ENCODE measurements at regions of chr17 and their contacts with region 1.

Region 1: DNA sequence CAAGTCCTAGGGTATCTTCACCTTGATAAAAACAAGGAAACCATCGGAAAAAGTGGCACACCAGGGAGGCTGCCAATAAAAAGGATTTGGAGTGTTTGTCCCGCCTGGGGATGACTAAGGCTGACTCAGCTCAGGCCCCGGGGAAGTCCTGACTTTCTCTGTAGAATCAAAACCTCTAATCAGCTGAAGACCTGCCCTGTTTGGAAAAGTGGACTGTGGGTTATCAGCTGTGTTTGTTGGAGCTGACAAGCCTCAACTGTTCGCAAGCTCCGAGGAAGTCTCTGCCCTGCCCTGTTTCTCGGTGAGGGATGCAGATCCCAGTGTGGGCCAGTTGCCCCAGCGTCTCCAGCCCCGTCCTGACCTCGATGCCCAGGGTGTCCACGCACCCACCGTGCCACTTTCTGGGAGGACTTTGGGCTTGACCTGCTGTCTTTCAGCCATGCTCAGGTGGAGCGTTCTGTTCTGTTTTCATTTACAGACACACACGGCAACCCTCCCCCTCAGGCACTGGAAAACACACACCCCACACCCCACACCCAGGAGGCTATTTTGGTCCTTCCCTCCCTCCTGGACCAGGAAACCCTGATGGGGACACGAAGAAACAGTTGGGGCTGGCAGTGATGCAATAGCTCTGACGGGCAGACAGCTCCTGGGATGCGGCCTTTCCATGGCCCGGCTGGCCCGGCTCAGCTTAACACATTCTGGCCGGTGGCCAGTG is 27.6 kb upstream of the PITPNA start:
- DNase-seq: peak; percentile 85 to 95 (median 92)
- H3K4me3 ChIP-seq: no peak overlapping the region
- H3K4me3 Mint-ChIP-seq: peak overlapping the region; percentile 35 to 60
- H3K27ac ChIP-seq: peak overlapping the region; percentile 88 to 99
- H3K27ac Mint-ChIP-seq: peak overlapping the region; percentile 98 to 99 (median 99)
- H3K4me1 ChIP-seq: peaks cover 76 to 84% of the 10 kb centered on the region in 2 donors
- H3K4me1 Mint-ChIP-seq: peaks cover 75% of the 10 kb centered on the region
- H3K27me3 ChIP-seq: no peaks in the 10 kb centered on the region
- H3K27me3 Mint-ChIP-seq: peaks cover 0 to 6% (median 2%) of the 10 kb centered on the region in 3 donors
- CTCF ChIP-seq: no peak

Region 2: DNA sequence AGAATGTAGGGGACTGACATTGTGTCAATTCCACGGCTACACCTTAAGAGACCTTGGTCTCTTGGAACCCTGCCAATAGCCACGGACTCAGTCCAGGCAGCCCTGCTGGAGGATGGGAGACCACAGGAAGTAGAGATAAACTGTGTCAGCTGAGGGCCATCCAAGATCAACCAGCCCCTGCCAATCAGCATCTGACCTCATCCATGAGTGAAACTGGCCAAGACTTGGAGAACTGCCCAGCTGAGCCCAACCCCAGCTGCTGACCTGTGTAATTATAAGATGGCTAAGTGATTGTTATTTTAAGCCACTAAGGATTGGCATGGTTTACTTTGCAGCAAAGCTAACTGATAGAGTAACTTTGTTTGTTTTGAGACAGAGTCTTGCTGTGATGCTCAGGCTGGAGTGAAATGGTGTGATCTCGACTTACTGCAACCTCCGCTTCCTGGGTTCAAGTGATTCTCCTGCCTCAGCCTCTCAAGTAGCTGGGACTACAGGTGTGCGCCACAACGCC is 176.9 kb before region 1 on chr17:
- intact Hi-C with region 1: no loop called
- DNase-seq: no peak
- H3K4me3 ChIP-seq: no peak overlapping the region
- H3K4me3 Mint-ChIP-seq: no peak overlapping the region
- H3K27ac ChIP-seq: no peak overlapping the region
- H3K27ac Mint-ChIP-seq: no peak overlapping the region
- H3K4me1 ChIP-seq: no peaks in the 10 kb centered on the region
- H3K4me1 Mint-ChIP-seq: no peaks in the 10 kb centered on the region
- H3K27me3 ChIP-seq: no peaks in the 10 kb centered on the region
- H3K27me3 Mint-ChIP-seq: peaks cover 3 to 5% (median 4%) of the 10 kb centered on the region in 3 donors
- CTCF ChIP-seq: no peak

Region 3: GRCh38 chr17:1561400-1562175 is 28.6 kb before region 1 on chr17:
- intact Hi-C with region 1: no loop called
- DNase-seq: peak in 1 of 3 donors; percentile 31
- H3K4me3 ChIP-seq: peak overlapping the region; percentile 42 to 88 (median 84)
- H3K4me3 Mint-ChIP-seq: peak overlapping the region; percentile 91
- H3K27ac ChIP-seq: peak overlapping the region in 1 of 2 donors; percentile 66
- H3K27ac Mint-ChIP-seq: peak overlapping the region; percentile 72 to 83 (median 80)
- H3K4me1 ChIP-seq: peaks cover 31 to 48% of the 10 kb centered on the region in 2 donors
- H3K4me1 Mint-ChIP-seq: peaks cover 58% of the 10 kb centered on the region
- H3K27me3 ChIP-seq: no peaks in the 10 kb centered on the region
- H3K27me3 Mint-ChIP-seq: peaks cover 7 to 20% (median 14%) of the 10 kb centered on the region in 3 donors
- CTCF ChIP-seq: no peak

Region 4: DNA sequence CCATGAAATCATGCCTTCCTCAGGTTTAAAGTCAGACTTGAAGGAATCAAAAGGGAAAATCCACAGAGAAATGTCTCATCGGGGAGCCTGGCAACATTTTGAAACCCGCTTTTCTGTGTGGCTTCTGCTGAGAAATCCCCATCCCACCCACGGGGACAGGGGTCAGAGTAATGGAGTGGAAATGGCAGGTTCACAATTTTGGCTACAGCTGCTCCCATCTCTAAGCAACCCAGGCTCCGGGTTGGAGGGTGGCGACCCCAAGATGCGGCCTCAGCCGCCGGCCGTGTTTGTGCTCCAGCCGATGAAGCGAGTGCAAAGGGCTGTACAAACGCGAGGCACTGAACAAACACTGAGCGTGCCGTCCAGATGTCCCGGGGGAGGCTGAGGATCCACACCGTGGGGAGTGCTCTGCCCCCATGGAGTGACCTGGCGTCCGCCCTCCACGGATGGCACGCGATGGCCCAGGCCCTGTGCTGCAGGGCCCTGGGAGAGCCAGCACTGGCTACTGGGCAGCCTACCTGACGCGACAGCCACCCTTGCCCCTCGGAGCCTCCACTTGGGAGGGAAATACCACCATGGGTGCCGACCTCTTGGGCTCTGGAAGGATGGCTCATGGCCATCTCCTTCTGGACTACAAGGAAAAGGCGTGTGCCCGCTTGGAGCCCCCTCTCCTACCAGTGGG is 16.3 kb after region 1 on chr17:
- intact Hi-C with region 1: loop called (anchors 1 kb)
- DNase-seq: peak in 1 of 3 donors; percentile 68
- H3K4me3 ChIP-seq: peak overlapping the region in 2 of 3 experiments; percentile 9 to 43
- H3K4me3 Mint-ChIP-seq: peak overlapping the region in 1 of 2 donors; percentile 50
- H3K27ac ChIP-seq: peak overlapping the region; percentile 99 to 100
- H3K27ac Mint-ChIP-seq: peak overlapping the region; percentile 98 to 100 (median 100)
- H3K4me1 ChIP-seq: peaks cover 69 to 70% of the 10 kb centered on the region in 2 donors
- H3K4me1 Mint-ChIP-seq: peaks cover 56% of the 10 kb centered on the region
- H3K27me3 ChIP-seq: no peaks in the 10 kb centered on the region
- H3K27me3 Mint-ChIP-seq: peaks cover 0 to 4% (median 2%) of the 10 kb centered on the region in 3 donors
- CTCF ChIP-seq: no peak

Measured in CD14-positive monocyte (primary cell).